ENCODE measurements at regions of chr10 and their contacts with region 1.

Region 1: GRCh38 chr10:27241652-27242472 is 1.3 kb upstream of the ACBD5 start:
- DNase-seq: peak; percentile 95
- H3K4me3 ChIP-seq: peak overlapping the region; percentile 21 to 84 (median 69)
- H3K27ac ChIP-seq: peak overlapping the region; percentile 83
- H3K4me1 ChIP-seq: peaks cover 18% of the 10 kb centered on the region
- H3K27me3 ChIP-seq: no peaks in the 10 kb centered on the region
- CTCF ChIP-seq: peak; percentile 16 to 24
- POLR2A ChIP-seq: peak; percentile 95

Region 2: GRCh38 chr10:26860443-26861204 is 381.2 kb before region 1 on chr10 and contains the start of gene ABI1:
- CTCF ChIA-PET with region 1: no interaction called
- POLR2A ChIA-PET with region 1: no interaction called
- dilution Hi-C with region 1: no loop called
- intact Hi-C with region 1: loop called (anchors 2 kb)
- DNase-seq: peak; percentile 100
- H3K4me3 ChIP-seq: peak within 1 kb of the TSS; percentile 99
- H3K27ac ChIP-seq: peak within 1 kb of the TSS; percentile 78
- H3K4me1 ChIP-seq: peaks cover 13% of the 10 kb centered on the region
- H3K27me3 ChIP-seq: peaks cover 8 to 10% of the 10 kb centered on the region in 2 experiments
- CTCF ChIP-seq: no peak
- POLR2A ChIP-seq: peak; percentile 87
- total RNA-seq, gene ABI1: 53.6 and 58.8 TPM in 2 replicates

Region 3: GRCh38 chr10:27223964-27224363 is 17.9 kb before region 1 on chr10:
- CTCF ChIA-PET with region 1: interaction called, 15 read pairs
- POLR2A ChIA-PET with region 1: no interaction called
- dilution Hi-C with region 1: no loop called
- intact Hi-C with region 1: no loop called
- DNase-seq: peak; percentile 36
- H3K4me3 ChIP-seq: no peak overlapping the region
- H3K27ac ChIP-seq: no peak overlapping the region
- H3K4me1 ChIP-seq: no peaks in the 10 kb centered on the region
- H3K27me3 ChIP-seq: no peaks in the 10 kb centered on the region
- CTCF ChIP-seq: peak; percentile 44 to 47
- POLR2A ChIP-seq: no peak

Region 4: DNA sequence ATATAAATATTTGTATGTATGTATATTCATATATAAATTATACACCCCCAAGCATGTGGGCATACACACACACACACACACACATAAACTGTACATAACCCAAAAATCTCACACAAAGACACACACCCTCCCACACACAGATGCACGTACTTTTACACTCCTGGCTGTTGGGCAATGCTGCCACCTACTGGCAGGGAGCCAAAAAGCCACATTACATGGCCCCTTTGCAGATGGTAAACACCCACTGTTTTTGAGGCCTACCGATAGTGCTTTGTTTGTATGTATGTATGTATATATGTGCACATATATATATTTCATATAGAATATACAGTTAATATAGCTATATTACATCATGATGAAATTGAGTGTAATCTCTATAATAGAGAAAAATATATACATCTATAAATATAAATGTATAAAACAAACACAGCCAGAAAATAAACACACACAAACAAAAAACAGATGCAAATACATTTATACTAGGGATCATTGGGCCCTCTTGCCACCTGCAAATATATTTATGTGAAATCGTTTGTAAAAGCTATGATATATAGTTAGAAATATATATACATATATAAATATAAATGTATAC is 118.8 kb after region 1 on chr10:
- CTCF ChIA-PET with region 1: no interaction called
- POLR2A ChIA-PET with region 1: no interaction called
- dilution Hi-C with region 1: no loop called
- intact Hi-C with region 1: loop called (anchors 5 kb)
- DNase-seq: peak; percentile 75
- H3K4me3 ChIP-seq: no peak overlapping the region
- H3K27ac ChIP-seq: no peak overlapping the region
- H3K4me1 ChIP-seq: no peaks in the 10 kb centered on the region
- H3K27me3 ChIP-seq: peaks cover 0 to 2% of the 10 kb centered on the region in 2 experiments
- CTCF ChIP-seq: peak; percentile 79 to 82
- POLR2A ChIP-seq: no peak